Naive thymus-derived CD8-positive, alpha-beta T cell (primary cell): ENCODE measurements at regions of chr13 and their contacts with region 1.

Region 1: GRCh38 chr13:99200432-99201167 is at the start of gene UBAC2:
- DNase-seq: peak; percentile 91 to 99 (median 98)
- ATAC-seq: peak; percentile 74 to 82
- H3K4me3 Mint-ChIP-seq: peak within 1 kb of the TSS; percentile 93 to 100 (median 96)
- H3K27ac Mint-ChIP-seq: peak within 1 kb of the TSS; percentile 95 to 99 (median 97)
- H3K4me1 Mint-ChIP-seq: peaks cover 32 to 77% (median 70%) of the 10 kb centered on the region in 4 donors
- H3K27me3 Mint-ChIP-seq: peaks cover 0 to 1% (median 0%) of the 10 kb centered on the region in 5 donors
- polyA plus RNA-seq, gene UBAC2: 160 to 178 (median 173) TPM

Region 2: GRCh38 chr13:98751861-98752466 is 448.6 kb before region 1 on chr13:
- POLR2A ChIA-PET with region 1: no interaction called
- DNase-seq: no peak
- ATAC-seq: no peak
- H3K4me3 Mint-ChIP-seq: peak overlapping the region in 9 of 10 donors; percentile 13 to 65 (median 53)
- H3K27ac Mint-ChIP-seq: no peak overlapping the region
- H3K4me1 Mint-ChIP-seq: peaks cover 0 to 12% (median 4%) of the 10 kb centered on the region in 4 donors
- H3K27me3 Mint-ChIP-seq: peaks cover 38 to 70% (median 50%) of the 10 kb centered on the region in 5 donors

Region 3: GRCh38 chr13:99176309-99177276 is 24.0 kb before region 1 on chr13:
- POLR2A ChIA-PET with region 1: interaction called, 34 read pairs
- DNase-seq: peak; percentile 56 to 88 (median 78)
- ATAC-seq: peak; percentile 85 to 91
- H3K4me3 Mint-ChIP-seq: peak overlapping the region; percentile 54 to 80 (median 75)
- H3K27ac Mint-ChIP-seq: peak overlapping the region; percentile 65 to 89 (median 82)
- H3K4me1 Mint-ChIP-seq: peaks cover 36 to 60% (median 54%) of the 10 kb centered on the region in 4 donors
- H3K27me3 Mint-ChIP-seq: peaks cover 0 to 4% (median 0%) of the 10 kb centered on the region in 5 donors

Region 4: GRCh38 chr13:99228737-99229691 is 28.4 kb after region 1 on chr13:
- POLR2A ChIA-PET with region 1: interaction called, 26 read pairs
- DNase-seq: peak in 1 of 10 donors; percentile 24
- ATAC-seq: peak; percentile 49 to 58
- H3K4me3 Mint-ChIP-seq: peak overlapping the region; percentile 66 to 89 (median 81)
- H3K27ac Mint-ChIP-seq: peak overlapping the region; percentile 73 to 95 (median 90)
- H3K4me1 Mint-ChIP-seq: peaks cover 42 to 91% (median 79%) of the 10 kb centered on the region in 4 donors
- H3K27me3 Mint-ChIP-seq: no peaks in the 10 kb centered on the region

Region 5: DNA sequence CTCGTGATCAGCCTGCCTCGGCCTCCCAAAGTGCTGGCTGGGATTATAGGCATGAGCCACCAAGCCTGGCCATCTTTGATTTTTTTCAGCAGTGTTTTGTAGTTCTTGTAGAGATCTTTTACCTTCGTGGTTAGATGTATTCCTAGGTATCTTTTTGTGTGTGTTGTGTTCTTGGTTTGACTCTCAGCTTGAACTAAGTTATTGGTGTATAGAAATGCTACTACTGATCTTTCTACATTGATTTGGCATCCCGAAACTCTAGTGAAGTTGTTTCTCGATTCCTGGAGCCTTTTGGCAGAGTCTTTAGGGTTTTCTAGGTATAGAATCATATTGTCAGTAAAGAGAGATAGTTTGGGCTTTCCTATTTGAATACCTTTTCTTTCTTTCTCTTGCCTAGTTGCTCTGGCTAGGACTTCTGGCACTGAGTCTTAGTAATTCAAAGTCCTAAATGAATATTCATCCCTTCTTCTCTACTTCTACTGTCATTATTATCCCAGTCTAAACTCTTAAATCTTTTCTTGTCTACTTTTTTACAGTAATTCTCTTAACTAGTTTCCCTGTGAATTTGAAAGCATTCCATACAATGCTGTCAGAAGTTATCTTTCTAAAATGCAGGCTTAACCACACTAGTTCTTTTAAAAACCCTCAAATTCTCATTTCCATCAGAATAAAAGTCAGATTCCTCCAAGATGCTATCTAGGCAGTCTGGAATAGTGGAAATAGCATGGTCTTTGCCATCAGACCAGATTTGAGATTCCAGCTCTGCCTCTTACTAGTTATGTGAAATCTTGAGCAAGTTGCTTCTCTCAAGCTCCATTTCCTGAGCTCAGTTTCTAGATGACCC is 50.6 kb after region 1 on chr13:
- POLR2A ChIA-PET with region 1: interaction called, 231 read pairs
- DNase-seq: no peak
- ATAC-seq: no peak
- H3K4me3 Mint-ChIP-seq: peak overlapping the region in 6 of 10 donors; percentile 8 to 62 (median 36)
- H3K27ac Mint-ChIP-seq: peak overlapping the region; percentile 76 to 93 (median 88)
- H3K4me1 Mint-ChIP-seq: peaks cover 34 to 72% (median 64%) of the 10 kb centered on the region in 4 donors
- H3K27me3 Mint-ChIP-seq: no peaks in the 10 kb centered on the region

Region 6: DNA sequence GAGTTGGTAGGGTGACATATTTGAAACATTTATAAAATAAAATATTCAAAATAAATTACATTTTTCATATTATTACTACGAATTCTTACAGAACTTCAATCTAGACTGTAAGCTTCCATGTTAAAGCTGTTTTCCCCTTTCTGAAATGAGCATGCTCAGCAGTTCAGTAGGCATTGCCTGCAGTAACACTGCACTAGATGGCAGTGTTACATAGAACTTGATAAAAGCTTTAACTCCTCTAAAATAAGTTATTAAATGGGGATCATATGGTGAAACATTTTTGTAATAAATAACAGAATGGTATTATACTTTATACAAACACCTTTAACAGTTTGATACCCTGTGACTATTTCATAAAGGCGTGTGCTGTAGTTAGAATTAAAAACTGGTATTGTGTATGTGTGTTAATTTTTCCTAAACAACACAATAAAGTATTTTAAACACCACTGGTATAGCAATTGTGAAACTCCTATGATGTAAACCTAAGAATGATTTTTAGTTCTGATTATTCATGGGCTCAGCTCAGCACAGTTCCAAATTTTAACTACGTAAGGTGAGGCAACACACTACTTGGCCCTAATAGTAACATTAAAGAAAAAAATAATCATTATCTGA is 69.1 kb after region 1 on chr13:
- POLR2A ChIA-PET with region 1: interaction called, 131 read pairs
- DNase-seq: peak in 4 of 10 donors; percentile 45 to 67 (median 56)
- ATAC-seq: peak; percentile 58 to 78
- H3K4me3 Mint-ChIP-seq: no peak overlapping the region
- H3K27ac Mint-ChIP-seq: peak overlapping the region; percentile 9 to 97 (median 78)
- H3K4me1 Mint-ChIP-seq: peaks cover 37 to 65% (median 64%) of the 10 kb centered on the region in 4 donors
- H3K27me3 Mint-ChIP-seq: no peaks in the 10 kb centered on the region

Region 7: GRCh38 chr13:99331881-99332293 is 131.3 kb after region 1 on chr13:
- POLR2A ChIA-PET with region 1: no interaction called
- DNase-seq: no peak
- ATAC-seq: no peak
- H3K4me3 Mint-ChIP-seq: no peak overlapping the region
- H3K27ac Mint-ChIP-seq: peak overlapping the region in 7 of 10 donors; percentile 28 to 70 (median 52)
- H3K4me1 Mint-ChIP-seq: peaks cover 23 to 55% (median 51%) of the 10 kb centered on the region in 4 donors
- H3K27me3 Mint-ChIP-seq: no peaks in the 10 kb centered on the region